ENCODE measurements at regions of chr4 and their contacts with region 1.

Region 1: GRCh38 chr4:158850800-158851644 is 82.2 kb downstream of the FNIP2 start:
- DNase-seq: no peak
- ATAC-seq: no peak
- H3K4me3 Mint-ChIP-seq: no peak overlapping the region
- H3K27ac Mint-ChIP-seq: no peak overlapping the region
- H3K4me1 Mint-ChIP-seq: peaks cover 5% of the 10 kb centered on the region
- H3K27me3 Mint-ChIP-seq: no peaks in the 10 kb centered on the region

Region 2: DNA sequence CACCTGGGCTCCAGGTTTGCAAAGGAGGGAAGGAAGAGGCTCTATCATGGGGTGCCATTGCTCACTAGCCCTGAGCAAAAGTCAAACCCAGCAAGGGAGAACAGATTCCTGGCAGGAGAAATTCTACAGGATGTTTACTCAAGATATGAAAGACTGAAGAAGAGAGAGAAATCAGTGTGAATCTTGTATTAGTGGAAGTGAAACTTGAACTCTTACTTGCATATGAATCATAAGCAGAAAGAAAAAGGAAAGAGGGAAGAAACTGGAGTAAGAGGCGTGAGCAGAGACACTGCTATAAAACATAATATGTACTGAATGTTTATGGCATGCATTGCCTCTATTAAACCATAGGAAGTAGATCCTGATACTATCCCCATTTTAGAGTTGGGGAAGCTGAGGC is 240.2 kb before region 1 on chr4:
- CTCF ChIA-PET with region 1: no interaction called
- POLR2A ChIA-PET with region 1: no interaction called
- DNase-seq: no peak
- ATAC-seq: no peak
- H3K4me3 Mint-ChIP-seq: no peak overlapping the region
- H3K27ac Mint-ChIP-seq: no peak overlapping the region
- H3K4me1 Mint-ChIP-seq: no peaks in the 10 kb centered on the region
- H3K27me3 Mint-ChIP-seq: no peaks in the 10 kb centered on the region

Region 3: DNA sequence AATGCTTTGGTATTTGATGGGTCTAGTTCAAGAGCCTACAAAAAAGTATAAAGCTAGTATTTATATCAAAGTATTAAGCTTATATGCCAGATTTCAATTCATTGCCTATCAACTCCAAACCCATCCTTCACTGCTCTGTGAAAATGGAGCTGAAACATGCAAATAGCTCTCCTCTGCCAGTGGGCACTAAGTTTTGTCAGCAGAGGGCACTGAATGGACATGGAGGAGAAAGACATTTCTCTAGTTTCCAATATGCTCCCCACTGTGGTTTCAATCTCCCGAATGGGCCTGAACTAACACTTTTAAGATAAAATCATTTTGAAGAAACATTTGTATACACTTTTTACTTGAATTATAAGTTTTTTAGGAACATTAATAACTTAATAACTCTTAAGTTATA is 140.2 kb before region 1 on chr4:
- CTCF ChIA-PET with region 1: interaction called, 10 read pairs
- POLR2A ChIA-PET with region 1: no interaction called
- DNase-seq: no peak
- ATAC-seq: no peak
- H3K4me3 Mint-ChIP-seq: no peak overlapping the region
- H3K27ac Mint-ChIP-seq: no peak overlapping the region
- H3K4me1 Mint-ChIP-seq: no peaks in the 10 kb centered on the region
- H3K27me3 Mint-ChIP-seq: no peaks in the 10 kb centered on the region

Region 4: DNA sequence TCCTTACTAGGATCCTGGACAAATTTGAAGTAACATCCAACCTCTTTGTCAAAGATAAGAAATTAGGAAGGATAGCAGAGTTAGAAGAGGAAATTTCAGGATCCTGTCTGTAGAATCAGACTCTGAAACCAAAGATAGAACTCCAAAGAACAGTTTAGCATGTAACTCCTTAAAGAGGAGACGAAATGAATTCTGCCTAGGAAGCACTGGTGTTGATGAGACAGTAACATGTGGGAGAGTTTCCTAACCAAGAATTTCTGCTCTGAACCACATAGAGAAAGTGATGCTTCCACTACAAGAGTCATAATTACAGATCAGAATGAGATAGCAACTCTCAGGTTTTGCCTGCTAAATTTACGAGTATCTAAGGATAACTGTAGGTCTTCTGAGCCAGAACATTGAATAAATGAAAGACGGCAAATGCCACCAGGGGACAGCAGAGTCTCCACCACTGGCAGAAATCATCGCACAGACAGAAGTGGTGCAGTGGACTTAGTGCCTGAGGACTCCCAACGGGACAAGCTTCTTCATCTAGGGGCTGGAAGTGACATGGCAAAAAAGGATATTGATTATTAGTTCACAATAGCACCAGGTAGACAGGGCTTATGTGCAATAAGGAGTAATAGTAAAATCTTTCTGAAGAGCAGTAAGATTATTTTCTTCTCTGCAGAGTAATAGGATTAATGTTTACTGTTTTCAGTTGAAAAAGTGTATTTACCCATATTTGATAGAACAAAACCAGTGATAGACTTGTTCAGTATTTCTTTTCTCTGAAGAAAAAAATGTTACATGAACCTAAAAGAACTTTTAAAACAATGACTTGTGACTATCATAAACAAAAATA is 121.1 kb before region 1 on chr4:
- CTCF ChIA-PET with region 1: interaction called, 23 read pairs
- POLR2A ChIA-PET with region 1: no interaction called
- DNase-seq: peak; percentile 63
- ATAC-seq: peak; percentile 83
- H3K4me3 Mint-ChIP-seq: no peak overlapping the region
- H3K27ac Mint-ChIP-seq: no peak overlapping the region
- H3K4me1 Mint-ChIP-seq: peaks cover 15% of the 10 kb centered on the region
- H3K27me3 Mint-ChIP-seq: peaks cover 21% of the 10 kb centered on the region

Region 5: DNA sequence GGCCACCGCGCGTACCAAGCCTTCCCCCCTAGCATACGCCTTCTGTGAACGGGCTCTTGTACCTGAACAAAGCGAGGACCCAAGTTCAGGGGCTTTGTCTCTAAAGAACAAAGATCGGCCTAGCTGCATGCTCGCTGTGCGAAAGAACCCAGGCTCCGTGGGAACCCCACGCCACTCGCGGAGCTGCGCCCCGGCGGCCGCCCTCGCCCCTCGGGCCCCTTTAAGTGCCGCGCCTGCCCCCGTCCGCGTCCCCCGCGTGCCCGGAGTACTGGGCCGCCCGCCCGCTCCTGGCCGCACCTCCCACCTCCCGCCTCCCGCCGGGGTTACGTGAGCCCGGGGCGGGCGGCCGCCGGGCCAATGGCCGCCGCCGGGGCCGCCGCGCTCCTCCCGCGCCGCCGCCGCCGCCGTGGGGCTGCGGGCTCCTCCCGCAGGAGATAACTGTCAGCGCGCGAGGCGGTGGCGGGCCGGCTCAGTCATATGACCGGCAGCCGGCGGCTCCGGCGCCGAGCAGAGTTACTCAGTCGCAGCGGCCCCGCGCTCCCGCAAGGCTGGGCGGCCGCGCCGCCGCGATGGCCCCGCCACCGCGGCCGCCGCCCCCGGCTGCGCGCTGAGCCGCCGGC is 82.4 kb before region 1 on chr4 and contains the start of gene FNIP2:
- CTCF ChIA-PET with region 1: interaction called, 10 read pairs
- POLR2A ChIA-PET with region 1: interaction called, 3 read pairs
- DNase-seq: peak; percentile 70
- ATAC-seq: peak; percentile 87
- H3K4me3 Mint-ChIP-seq: peak within 1 kb of the TSS; percentile 96
- H3K27ac Mint-ChIP-seq: peak within 1 kb of the TSS; percentile 91
- H3K4me1 Mint-ChIP-seq: peaks cover 32% of the 10 kb centered on the region
- H3K27me3 Mint-ChIP-seq: peaks cover 4% of the 10 kb centered on the region
- total RNA-seq, gene FNIP2: 13.1 to 13.7 TPM

Region 6: DNA sequence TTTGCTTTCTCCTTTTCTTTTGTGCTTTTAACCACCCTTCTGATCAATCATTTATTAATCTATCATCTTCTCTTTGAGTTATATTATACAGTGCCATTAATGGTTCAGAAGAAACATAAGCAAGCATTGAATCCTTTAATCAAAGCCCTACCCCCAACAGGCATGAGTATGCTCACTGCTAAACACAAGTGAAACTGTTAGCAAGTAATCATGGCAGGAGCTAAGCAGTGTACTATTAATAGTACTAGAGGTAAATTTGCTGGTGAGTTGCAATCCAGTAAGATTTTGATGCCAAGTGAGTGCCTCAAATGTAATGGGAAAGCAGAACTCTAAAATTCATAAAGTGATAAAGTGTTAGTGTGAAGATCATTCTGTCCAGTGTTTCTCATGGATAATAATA is 25.0 kb before region 1 on chr4:
- CTCF ChIA-PET with region 1: interaction called, 10 read pairs
- POLR2A ChIA-PET with region 1: no interaction called
- DNase-seq: no peak
- ATAC-seq: no peak
- H3K4me3 Mint-ChIP-seq: no peak overlapping the region
- H3K27ac Mint-ChIP-seq: no peak overlapping the region
- H3K4me1 Mint-ChIP-seq: peaks cover 26% of the 10 kb centered on the region
- H3K27me3 Mint-ChIP-seq: no peaks in the 10 kb centered on the region

Region 7: DNA sequence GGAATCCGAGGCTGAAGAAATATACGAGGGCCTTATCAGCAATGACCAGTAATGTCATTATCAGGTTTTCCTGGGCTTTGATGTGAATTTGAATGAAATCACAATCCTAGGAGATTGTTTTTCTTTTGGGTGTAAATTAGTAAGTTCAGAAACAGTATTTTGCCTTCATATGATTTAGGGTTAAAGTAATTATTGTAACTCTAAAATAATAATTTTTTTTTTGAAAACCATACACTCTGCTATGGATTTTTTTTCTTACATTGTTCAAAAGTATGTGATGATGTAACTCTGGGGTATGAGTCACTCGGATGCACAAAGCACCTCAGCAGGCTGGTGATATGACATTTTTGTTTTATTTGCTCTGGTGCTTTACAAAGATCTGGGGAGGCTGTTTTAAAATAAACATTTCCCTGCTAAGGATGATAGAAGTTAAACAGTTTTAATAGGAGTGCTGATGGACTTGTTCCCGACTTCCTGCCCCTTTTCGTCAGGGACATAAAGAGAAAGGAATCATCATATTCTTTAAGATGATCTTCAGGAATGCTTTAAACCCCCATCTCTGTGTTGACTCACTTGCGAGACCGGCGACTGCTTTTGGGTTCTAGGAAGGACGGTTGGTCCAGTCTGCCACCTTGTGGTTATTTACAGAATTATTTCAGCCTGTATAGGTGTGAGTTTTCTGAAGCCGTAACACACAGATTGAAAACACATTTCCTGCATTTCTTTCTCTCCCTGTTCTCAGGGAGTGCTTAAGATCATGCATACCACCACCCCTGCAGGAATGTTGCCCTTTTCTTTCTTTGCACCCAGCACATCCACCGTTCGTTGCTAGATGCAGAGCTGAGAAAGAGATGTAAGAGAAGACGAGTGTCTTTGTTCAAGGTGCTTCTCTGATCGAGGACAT is 324.3 kb after region 1 on chr4:
- CTCF ChIA-PET with region 1: interaction called, 16 read pairs
- POLR2A ChIA-PET with region 1: no interaction called
- DNase-seq: peak; percentile 71
- ATAC-seq: peak; percentile 87
- H3K4me3 Mint-ChIP-seq: no peak overlapping the region
- H3K27ac Mint-ChIP-seq: no peak overlapping the region
- H3K4me1 Mint-ChIP-seq: peaks cover 33% of the 10 kb centered on the region
- H3K27me3 Mint-ChIP-seq: peaks cover 3% of the 10 kb centered on the region

Region 8: DNA sequence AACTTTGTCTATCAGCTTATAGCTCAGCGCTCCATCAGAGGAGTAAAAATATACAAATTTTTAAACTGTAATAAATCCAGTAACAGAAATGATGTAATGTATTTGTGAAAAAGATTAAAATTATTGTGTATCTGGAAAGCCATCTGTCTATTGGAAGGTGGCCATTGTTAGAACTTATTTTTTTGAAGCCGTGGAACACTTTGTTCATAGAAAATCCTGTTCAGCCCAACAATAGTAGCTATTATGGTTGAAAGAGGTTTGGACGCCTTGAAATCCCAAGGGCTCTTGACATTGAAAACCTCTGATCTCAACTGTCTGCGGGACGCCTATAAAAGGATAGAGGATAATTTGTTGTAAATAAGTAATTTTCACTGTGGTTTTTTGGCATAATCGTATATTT is 350.1 kb after region 1 on chr4:
- CTCF ChIA-PET with region 1: interaction called, 38 read pairs
- POLR2A ChIA-PET with region 1: no interaction called
- DNase-seq: no peak
- ATAC-seq: no peak
- H3K4me3 Mint-ChIP-seq: no peak overlapping the region
- H3K27ac Mint-ChIP-seq: no peak overlapping the region
- H3K4me1 Mint-ChIP-seq: peaks cover 16% of the 10 kb centered on the region
- H3K27me3 Mint-ChIP-seq: no peaks in the 10 kb centered on the region